IMR-90 (cell line): ENCODE measurements at regions of chr15 and their contacts with region 1.

Region 1: DNA sequence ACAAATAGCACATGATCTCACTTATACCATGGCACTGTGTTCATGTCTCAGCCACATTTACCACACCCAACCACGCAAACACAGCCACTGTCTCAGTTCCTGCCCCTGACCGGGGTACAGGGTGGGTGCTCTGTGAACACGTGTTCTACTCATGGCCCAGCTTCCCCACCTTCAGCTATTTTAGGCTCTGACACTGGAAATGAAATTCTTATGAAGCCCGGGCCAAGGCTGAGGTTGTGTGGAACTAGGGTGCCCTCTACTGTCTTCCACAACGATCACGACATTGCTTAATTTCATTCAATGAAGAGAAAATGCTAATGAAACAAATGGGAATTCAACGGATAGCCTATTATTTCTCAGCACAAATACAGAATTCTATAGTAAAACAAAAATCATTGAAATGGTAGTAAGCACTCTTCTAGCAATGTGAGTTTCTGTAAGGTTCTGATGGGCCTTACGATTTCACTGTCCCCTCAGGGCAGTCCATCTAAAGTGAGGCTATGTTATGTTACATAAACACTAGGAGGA is 2.1 kb upstream of the GABRA5 start:
- DNase-seq: peak; percentile 36
- ATAC-seq: peak; percentile 56
- H3K4me3 ChIP-seq: no peak overlapping the region
- H3K27ac ChIP-seq: no peak overlapping the region
- H3K4me1 ChIP-seq: no peaks in the 10 kb centered on the region
- H3K27me3 ChIP-seq: peaks cover 16% of the 10 kb centered on the region
- CTCF ChIP-seq: peak; percentile 68
- POLR2A ChIP-seq: no peak
- RAD21 ChIP-seq: peak; percentile 83

Region 2: DNA sequence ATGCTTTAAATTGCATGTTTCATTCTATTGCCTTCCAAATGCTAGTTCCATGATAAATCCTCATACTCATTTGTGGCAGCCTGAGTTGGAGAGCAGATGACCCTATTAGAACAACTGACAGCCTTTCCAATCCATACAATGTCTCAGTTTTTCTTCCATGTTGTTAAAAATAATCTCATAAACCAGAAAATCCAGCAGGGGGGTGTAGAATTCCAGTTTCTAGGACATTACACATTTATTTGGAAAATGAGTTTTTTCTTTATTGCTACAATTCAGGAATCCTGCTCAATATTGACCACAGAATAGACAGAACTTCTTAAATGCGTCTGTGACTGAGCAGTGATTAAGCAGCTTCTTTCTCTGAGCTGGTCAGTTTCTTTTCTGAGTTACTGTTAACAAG is 827.4 kb before region 1 on chr15:
- CTCF ChIA-PET with region 1: no interaction called
- POLR2A ChIA-PET with region 1: no interaction called
- dilution Hi-C with region 1: no loop called
- in situ Hi-C with region 1: no loop called
- intact Hi-C with region 1: loop called (anchors 5 kb)
- DNase-seq: no peak
- ATAC-seq: no peak
- H3K4me3 ChIP-seq: no peak overlapping the region
- H3K27ac ChIP-seq: no peak overlapping the region
- H3K4me1 ChIP-seq: no peaks in the 10 kb centered on the region
- H3K27me3 ChIP-seq: peaks cover 2% of the 10 kb centered on the region; the same call in 1 of the 2 replicates
- CTCF ChIP-seq: no peak
- POLR2A ChIP-seq: no peak
- RAD21 ChIP-seq: peak; percentile 25; the same call in 1 of the 2 replicates

Region 3: DNA sequence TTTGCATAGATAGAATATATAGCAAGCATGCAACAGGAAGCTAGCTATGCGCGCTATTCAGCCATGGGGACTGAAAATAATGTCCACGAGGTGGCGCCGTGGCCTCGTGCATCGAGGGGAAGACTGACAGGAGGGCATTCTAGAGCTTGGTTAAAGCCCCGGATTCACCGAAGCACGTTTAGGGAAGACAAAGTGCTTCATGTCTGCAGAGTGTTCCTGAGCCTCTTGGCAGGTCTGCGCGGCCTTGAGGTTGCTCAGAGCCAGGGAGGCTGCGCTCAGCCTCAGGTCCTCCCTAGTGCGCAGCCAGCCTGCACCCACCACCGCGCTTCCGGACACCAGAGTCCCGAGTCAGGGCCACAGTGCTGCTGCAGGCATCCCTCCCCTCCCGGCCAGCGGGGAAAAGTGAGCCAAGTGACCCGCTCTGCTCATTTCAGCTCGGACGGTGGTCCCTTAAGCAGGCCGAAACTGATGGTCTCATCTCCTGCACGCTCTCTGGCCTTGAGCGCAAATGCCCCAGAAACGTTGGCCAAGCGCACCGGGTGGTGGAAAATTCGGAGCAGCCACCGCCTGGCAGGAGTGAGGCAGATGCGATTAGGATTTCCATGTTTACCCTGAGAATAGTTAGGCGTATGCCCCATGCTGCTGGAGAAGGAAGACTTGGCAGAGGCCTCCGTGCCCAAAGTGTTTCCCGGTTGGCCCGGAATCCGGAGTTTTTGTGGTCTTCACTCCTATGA is 26.9 kb after region 1 on chr15:
- CTCF ChIA-PET with region 1: no interaction called
- POLR2A ChIA-PET with region 1: no interaction called
- dilution Hi-C with region 1: no loop called
- in situ Hi-C with region 1: no loop called
- intact Hi-C with region 1: no loop called
- DNase-seq: peak; percentile 38
- ATAC-seq: peak; percentile 84
- H3K4me3 ChIP-seq: 0 out of 2 replicates have a peak overlapping the region, but pooled peaks have one; percentile 15
- H3K27ac ChIP-seq: no peak overlapping the region
- H3K4me1 ChIP-seq: no peaks in the 10 kb centered on the region
- H3K27me3 ChIP-seq: no peaks in the 10 kb centered on the region
- CTCF ChIP-seq: peak; percentile 61
- POLR2A ChIP-seq: no peak
- RAD21 ChIP-seq: peak; percentile 60